CD4-positive, alpha-beta T cell (primary cell): ENCODE measurements at regions of chr2 and their contacts with region 1.

Region 1: GRCh38 chr2:43484323-43484930 is 111.4 kb downstream of the THADA start:
- DNase-seq: peak in 3 of 14 experiments; percentile 68 to 79 (median 76)
- ATAC-seq: no peak
- H3K4me3 ChIP-seq: no peak overlapping the region
- H3K4me3 Mint-ChIP-seq: no peak overlapping the region
- H3K27ac ChIP-seq: no peak overlapping the region
- H3K27ac Mint-ChIP-seq: no peak overlapping the region
- H3K4me1 ChIP-seq: no peaks in the 10 kb centered on the region
- H3K4me1 Mint-ChIP-seq: no peaks in the 10 kb centered on the region
- H3K27me3 ChIP-seq: no peaks in the 10 kb centered on the region
- H3K27me3 Mint-ChIP-seq: no peaks in the 10 kb centered on the region
- CTCF ChIP-seq: peak; percentile 75

Region 2: DNA sequence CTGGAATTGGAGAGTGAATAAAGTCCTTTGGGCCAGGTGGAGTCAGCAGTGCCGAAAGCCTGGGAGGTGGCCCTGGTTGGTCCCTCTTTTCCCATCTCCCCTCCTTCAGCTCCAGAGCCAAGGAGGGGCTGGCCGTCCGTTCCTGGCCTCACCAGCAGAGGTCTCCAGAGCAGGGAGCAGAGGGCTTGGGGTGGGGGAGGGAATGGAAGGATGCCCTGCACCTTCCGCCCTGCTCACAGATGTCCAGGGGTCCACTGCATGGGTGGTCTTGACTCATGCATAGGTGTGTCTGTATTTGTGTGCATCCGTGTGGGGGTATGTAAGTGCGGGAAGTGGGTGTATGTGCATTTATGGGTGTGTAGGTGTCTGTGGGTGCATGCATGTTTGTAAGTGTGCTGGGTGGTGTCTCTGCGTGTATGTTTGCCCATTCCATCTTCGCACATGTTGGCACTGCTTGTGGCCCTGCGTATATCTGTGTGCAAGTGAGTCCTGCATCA is 459.9 kb before region 1 on chr2:
- CTCF ChIA-PET with region 1: interaction called, 3 read pairs
- POLR2A ChIA-PET with region 1: no interaction called
- intact Hi-C with region 1: loop called in 1 of 2 experiments (anchors 5 kb)
- DNase-seq: peak in 13 of 14 experiments; percentile 9 to 62 (median 37)
- ATAC-seq: peak; percentile 66
- H3K4me3 ChIP-seq: no peak overlapping the region
- H3K4me3 Mint-ChIP-seq: no peak overlapping the region
- H3K27ac ChIP-seq: no peak overlapping the region
- H3K27ac Mint-ChIP-seq: peak overlapping the region; percentile 69
- H3K4me1 ChIP-seq: peaks cover 10% of the 10 kb centered on the region
- H3K4me1 Mint-ChIP-seq: peaks cover 28% of the 10 kb centered on the region
- H3K27me3 ChIP-seq: no peaks in the 10 kb centered on the region
- H3K27me3 Mint-ChIP-seq: no peaks in the 10 kb centered on the region
- CTCF ChIP-seq: peak; percentile 67

Region 3: DNA sequence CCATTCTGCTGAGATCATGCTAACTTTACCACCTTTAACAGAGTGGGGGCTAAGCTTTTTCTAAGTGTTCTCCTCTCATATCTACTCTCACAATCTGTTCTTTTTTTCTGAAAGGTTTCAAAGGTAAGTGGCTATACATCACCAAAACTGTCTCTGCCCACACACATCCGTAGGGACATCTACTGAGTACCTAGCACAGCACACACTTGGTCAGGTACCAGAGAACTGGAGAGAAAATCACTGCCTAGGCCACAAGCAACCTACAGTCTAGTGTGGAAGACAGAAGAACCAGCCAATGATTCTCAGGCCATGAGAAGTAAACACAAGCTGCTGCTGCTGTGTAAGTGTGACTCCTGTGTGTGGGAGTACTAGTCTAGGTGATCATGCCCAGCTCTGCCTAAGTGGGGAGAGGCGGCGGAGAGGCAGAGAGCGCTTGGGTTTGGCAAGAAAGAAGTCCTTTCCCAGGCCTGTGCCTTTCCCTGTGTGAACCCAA is 81.9 kb before region 1 on chr2:
- CTCF ChIA-PET with region 1: no interaction called
- POLR2A ChIA-PET with region 1: no interaction called
- intact Hi-C with region 1: no loop called
- DNase-seq: no peak
- ATAC-seq: no peak
- H3K4me3 ChIP-seq: no peak overlapping the region
- H3K4me3 Mint-ChIP-seq: no peak overlapping the region
- H3K27ac ChIP-seq: no peak overlapping the region
- H3K27ac Mint-ChIP-seq: no peak overlapping the region
- H3K4me1 ChIP-seq: no peaks in the 10 kb centered on the region
- H3K4me1 Mint-ChIP-seq: no peaks in the 10 kb centered on the region
- H3K27me3 ChIP-seq: no peaks in the 10 kb centered on the region
- H3K27me3 Mint-ChIP-seq: no peaks in the 10 kb centered on the region
- CTCF ChIP-seq: no peak

Region 4: DNA sequence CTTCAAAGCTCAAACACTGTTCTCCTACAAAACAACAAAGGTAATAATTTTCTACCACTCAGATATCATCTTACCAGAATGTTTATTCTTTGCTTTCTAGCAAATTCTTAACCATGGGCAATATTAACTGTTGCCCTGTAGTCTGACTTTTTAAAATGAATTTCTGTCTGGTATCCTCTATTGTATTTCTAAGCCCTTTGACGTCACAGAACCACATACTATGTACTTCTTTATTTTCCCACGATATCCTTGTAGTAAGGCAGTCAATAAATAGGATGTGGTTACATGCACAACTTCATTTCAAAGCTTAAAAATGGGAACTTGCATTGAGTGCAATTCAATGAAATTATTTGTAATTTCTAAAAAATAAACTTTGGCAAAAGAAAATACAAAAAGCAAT is 52.7 kb after region 1 on chr2:
- CTCF ChIA-PET with region 1: no interaction called
- POLR2A ChIA-PET with region 1: no interaction called
- intact Hi-C with region 1: loop called in 1 of 2 experiments (anchors 1 kb)
- DNase-seq: peak in 3 of 14 experiments; percentile 47 to 55 (median 50)
- ATAC-seq: peak; percentile 98
- H3K4me3 ChIP-seq: no peak overlapping the region
- H3K4me3 Mint-ChIP-seq: peak overlapping the region; percentile 67
- H3K27ac ChIP-seq: no peak overlapping the region
- H3K27ac Mint-ChIP-seq: peak overlapping the region; percentile 80
- H3K4me1 ChIP-seq: peaks cover 3% of the 10 kb centered on the region
- H3K4me1 Mint-ChIP-seq: peaks cover 29% of the 10 kb centered on the region
- H3K27me3 ChIP-seq: no peaks in the 10 kb centered on the region
- H3K27me3 Mint-ChIP-seq: no peaks in the 10 kb centered on the region
- CTCF ChIP-seq: no peak

Region 5: DNA sequence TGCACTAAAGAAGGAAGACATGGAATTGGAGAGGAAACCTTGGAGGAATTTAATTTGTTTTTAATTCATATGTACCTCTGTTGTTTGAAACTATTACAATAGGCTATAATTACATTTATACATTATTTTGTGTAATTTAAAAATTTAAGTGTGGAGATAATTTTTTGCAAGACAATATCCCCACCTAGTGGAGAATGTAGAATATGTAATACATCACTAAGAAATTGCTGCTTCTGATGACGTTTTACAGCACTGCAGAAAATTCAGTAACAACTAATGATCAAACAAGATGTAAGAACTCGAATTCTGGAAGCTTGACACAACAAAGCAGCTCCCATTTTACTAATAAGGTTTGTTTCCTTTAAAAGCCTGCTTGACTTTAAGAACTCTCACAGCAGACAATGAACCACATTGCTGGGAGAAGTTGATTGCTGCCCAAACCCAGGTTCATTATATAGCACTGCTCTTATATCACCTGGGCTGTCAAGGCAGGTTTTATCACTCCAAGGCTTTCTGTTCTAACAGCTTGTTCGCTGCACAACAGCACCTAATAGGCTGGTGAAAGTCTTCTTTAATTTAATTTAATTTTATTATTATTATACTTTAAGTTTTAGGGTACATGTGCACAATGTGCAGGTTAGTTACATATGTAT is 58.0 kb after region 1 on chr2:
- CTCF ChIA-PET with region 1: no interaction called
- POLR2A ChIA-PET with region 1: no interaction called
- intact Hi-C with region 1: loop called in 1 of 2 experiments (anchors 1 kb)
- DNase-seq: peak in 3 of 14 experiments; percentile 63 to 68 (median 65)
- ATAC-seq: peak; percentile 89
- H3K4me3 ChIP-seq: no peak overlapping the region
- H3K4me3 Mint-ChIP-seq: no peak overlapping the region
- H3K27ac ChIP-seq: no peak overlapping the region
- H3K27ac Mint-ChIP-seq: no peak overlapping the region
- H3K4me1 ChIP-seq: peaks cover 3% of the 10 kb centered on the region
- H3K4me1 Mint-ChIP-seq: peaks cover 16% of the 10 kb centered on the region
- H3K27me3 ChIP-seq: no peaks in the 10 kb centered on the region
- H3K27me3 Mint-ChIP-seq: no peaks in the 10 kb centered on the region
- CTCF ChIP-seq: peak; percentile 78

Region 6: GRCh38 chr2:43676322-43677050 is 192.1 kb after region 1 on chr2 and contains the start of gene C1GALT1C1L:
- CTCF ChIA-PET with region 1: no interaction called
- POLR2A ChIA-PET with region 1: no interaction called
- intact Hi-C with region 1: no loop called
- DNase-seq: peak in 6 of 14 experiments; percentile 10 to 36 (median 16)
- ATAC-seq: peak; percentile 26
- H3K4me3 ChIP-seq: peak within 1 kb of the TSS; percentile 31
- H3K4me3 Mint-ChIP-seq: peak within 1 kb of the TSS; percentile 43
- H3K27ac ChIP-seq: no peak within 1 kb of the TSS
- H3K27ac Mint-ChIP-seq: no peak within 1 kb of the TSS
- H3K4me1 ChIP-seq: peaks cover 5% of the 10 kb centered on the region
- H3K4me1 Mint-ChIP-seq: no peaks in the 10 kb centered on the region
- H3K27me3 ChIP-seq: peaks cover 5 to 13% of the 10 kb centered on the region in 2 experiments
- H3K27me3 Mint-ChIP-seq: peaks cover 47% of the 10 kb centered on the region
- CTCF ChIP-seq: no peak
- total RNA-seq, gene C1GALT1C1L: not detected